GM12878 (cell line): ENCODE measurements at regions of chr4 and their contacts with region 1.

Region 1: DNA sequence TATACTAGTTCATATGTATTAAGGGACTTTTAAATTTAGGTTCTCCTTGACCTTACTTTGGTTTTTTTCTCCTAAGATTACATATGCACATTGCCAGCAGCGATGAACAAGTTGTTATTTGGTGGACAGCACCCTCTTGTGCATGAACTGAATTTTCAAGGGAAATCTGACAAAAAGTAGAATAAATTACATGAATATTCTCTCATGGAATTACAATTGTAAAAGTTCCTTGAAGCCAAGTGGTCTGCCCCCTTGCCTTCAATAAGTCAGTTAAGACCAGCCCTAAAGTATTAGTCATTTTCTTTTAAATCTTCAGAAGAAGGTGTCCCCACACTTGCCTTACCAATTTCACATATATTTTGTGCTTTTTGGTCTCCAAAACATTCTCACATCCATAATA is 30.7 kb upstream of the SMARCA5 start:
- DNase-seq: no peak
- ATAC-seq: peak; percentile 83
- H3K4me3 ChIP-seq: no peak overlapping the region
- H3K27ac ChIP-seq: no peak overlapping the region
- H3K4me1 ChIP-seq: no peaks in the 10 kb centered on the region
- H3K27me3 ChIP-seq: no peaks in the 10 kb centered on the region; a peak in 1 of 4 replicates
- CTCF ChIP-seq: peak; percentile 38 to 74 (median 42); a peak in 4 of 6 replicates
- EP300 ChIP-seq: no peak
- POLR2A ChIP-seq: no peak
- RAD21 ChIP-seq: peak; percentile 94

Region 2: DNA sequence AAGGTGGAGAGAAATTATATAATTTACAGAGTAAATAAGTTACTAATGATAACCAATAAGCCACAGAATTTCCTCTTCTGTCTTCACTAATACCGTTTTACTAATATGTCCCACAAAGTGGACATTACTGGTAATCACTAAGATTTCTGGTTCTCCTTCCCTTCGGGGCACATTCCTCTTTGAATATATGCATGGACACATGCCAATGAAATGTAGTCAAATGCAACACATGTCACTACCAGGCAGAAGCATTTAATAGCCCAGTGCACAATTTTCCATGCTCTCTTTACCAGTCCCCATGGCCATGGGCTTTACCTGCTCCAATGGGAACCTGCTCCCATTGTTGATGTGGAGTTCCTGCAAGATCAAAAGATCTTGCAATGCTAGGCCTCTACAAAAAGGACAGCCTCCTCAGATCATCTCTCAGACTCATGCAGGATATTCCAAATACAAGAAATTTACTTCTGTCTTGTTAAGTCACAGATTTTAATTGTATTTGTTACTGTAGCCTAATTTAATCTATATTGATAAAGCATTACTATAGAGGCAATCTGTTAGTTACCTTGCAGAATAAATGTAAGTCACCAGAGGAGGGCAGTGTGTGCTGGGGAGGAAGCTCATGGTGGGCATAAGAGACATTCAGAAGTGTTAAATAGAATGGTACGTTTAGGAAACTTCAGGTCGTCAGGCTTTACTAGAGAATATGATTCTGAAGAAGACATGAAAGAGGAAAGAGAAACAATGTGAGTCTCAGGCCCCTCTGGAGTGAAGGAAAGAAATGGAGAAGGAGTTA is 599.6 kb before region 1 on chr4:
- CTCF ChIA-PET with region 1: interaction called, 4 read pairs
- POLR2A ChIA-PET with region 1: no interaction called
- RAD21 ChIA-PET with region 1: no interaction called
- SMC1A ChIA-PET with region 1: no interaction called
- in situ Hi-C with region 1: no loop called
- intact Hi-C with region 1: loop called (anchors 10 kb)
- DNase-seq: no peak
- ATAC-seq: peak; percentile 57; the same call in 2 of the 3 replicates
- H3K4me3 ChIP-seq: no peak overlapping the region
- H3K27ac ChIP-seq: no peak overlapping the region
- H3K4me1 ChIP-seq: no peaks in the 10 kb centered on the region
- H3K27me3 ChIP-seq: no peaks in the 10 kb centered on the region
- CTCF ChIP-seq: peak in 2 of 3 experiments; percentile 20 to 30; a peak in 2 of 6 replicates
- EP300 ChIP-seq: no peak
- POLR2A ChIP-seq: no peak
- RAD21 ChIP-seq: peak; percentile 25; the same call in 1 of the 2 replicates

Region 3: GRCh38 chr4:143046454-143046853 is 436.4 kb before region 1 on chr4:
- CTCF ChIA-PET with region 1: no interaction called
- POLR2A ChIA-PET with region 1: no interaction called
- RAD21 ChIA-PET with region 1: no interaction called
- SMC1A ChIA-PET with region 1: no interaction called
- in situ Hi-C with region 1: no loop called
- intact Hi-C with region 1: no loop called
- DNase-seq: no peak
- ATAC-seq: no peak
- H3K4me3 ChIP-seq: no peak overlapping the region
- H3K27ac ChIP-seq: no peak overlapping the region
- H3K4me1 ChIP-seq: no peaks in the 10 kb centered on the region
- H3K27me3 ChIP-seq: no peaks in the 10 kb centered on the region
- CTCF ChIP-seq: no peak
- EP300 ChIP-seq: no peak
- POLR2A ChIP-seq: no peak
- RAD21 ChIP-seq: no peak

Region 4: DNA sequence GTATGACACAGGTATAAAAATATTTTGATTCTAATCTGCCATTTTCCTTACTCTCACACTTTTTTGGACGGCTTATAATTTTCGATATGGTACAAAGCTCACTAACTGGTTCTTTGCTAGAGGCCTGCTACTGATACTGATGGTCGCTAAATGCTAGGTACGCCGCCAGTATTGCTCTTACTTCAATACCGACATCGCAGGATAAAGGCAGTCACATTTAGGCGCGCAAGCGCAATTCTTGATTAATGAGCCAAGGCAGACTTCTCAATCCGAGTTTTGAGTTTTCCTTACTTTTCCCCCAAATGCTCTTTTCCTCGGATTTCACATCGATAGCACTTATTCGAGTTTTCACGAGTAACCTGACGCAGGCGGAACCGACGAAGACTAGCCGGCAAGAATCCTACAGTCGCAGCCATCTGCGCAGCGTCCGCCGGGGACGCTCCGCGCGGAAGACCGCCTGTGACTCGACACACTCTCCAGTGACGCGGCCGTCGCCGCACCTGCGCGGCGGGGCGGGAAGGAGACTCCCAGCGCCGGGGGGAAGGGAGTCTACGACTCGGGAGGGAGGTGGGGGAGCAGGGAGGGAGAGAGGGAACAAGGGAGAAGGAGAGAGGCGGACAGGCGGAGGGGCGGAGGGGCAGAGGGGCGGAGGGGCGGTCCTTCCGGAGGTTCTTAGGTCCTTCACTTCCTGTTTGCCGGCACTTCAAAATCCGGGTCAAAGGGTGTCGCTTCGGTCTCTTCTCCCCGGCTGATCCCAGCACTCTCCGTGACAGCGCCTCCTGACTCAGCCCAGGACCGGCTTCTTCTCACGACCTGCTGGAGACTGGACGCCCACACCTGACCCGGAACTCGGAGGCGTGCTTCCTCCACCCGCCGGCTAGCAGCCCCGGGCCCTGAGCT is 298.4 kb before region 1 on chr4 and contains the start of gene USP38:
- CTCF ChIA-PET with region 1: no interaction called
- POLR2A ChIA-PET with region 1: no interaction called
- RAD21 ChIA-PET with region 1: no interaction called
- SMC1A ChIA-PET with region 1: no interaction called
- in situ Hi-C with region 1: no loop called
- intact Hi-C with region 1: loop called (anchors 5 kb)
- DNase-seq: peak; percentile 73
- ATAC-seq: peak; percentile 88
- H3K4me3 ChIP-seq: peak within 1 kb of the TSS; percentile 89
- H3K27ac ChIP-seq: peak within 1 kb of the TSS; percentile 77
- H3K4me1 ChIP-seq: no peaks in the 10 kb centered on the region
- H3K27me3 ChIP-seq: no peaks in the 10 kb centered on the region
- CTCF ChIP-seq: no peak
- EP300 ChIP-seq: no peak
- POLR2A ChIP-seq: peak; percentile 77
- RAD21 ChIP-seq: no peak
- polyA plus RNA-seq, gene USP38: 4.4 to 4.6 TPM

Region 5: DNA sequence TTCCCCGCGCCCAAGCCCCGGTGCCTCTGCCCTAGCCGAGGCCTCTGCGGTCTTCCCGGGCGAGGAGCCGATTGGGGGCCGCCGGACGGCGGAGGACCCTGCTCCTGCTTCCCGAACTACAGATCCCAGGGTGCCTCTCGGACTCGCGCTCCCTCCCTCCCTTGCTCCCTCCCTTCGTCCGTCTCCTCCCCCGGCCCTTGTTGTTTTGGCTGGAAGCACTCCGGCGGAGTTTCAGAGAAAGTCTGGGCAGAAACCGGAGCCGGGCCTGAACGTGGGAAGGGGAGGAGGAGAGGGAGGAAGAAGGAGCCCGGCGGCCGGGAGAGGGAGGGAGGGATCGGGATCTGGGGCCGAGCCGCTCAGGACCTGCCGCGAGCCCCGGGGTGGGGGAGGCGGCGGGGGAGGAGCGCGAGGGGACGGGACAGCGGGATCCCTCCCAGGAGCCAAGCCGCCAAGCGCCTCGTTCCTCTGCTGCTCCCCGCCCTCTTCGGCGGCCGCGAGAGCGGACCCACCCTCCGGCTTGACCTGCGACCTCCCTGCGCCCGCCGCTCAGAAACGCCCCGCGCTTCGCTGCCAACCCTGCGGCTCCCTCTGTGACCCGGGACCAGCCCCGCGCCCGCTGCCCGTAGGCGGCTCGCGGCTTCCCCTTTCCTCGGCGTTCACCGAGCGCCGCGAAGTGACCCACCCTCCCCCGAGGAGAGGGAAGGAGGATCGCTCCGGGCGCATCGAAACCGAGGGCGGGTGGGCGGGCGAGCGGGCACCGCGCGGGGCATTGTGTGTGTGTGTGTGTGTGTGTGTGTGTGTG is 146.7 kb before region 1 on chr4:
- CTCF ChIA-PET with region 1: interaction called, 4 read pairs
- POLR2A ChIA-PET with region 1: no interaction called
- RAD21 ChIA-PET with region 1: no interaction called
- SMC1A ChIA-PET with region 1: no interaction called
- in situ Hi-C with region 1: no loop called
- intact Hi-C with region 1: loop called (anchors 5 kb)
- DNase-seq: no peak
- ATAC-seq: peak; percentile 66
- H3K4me3 ChIP-seq: peak overlapping the region; percentile 87
- H3K27ac ChIP-seq: no peak overlapping the region
- H3K4me1 ChIP-seq: no peaks in the 10 kb centered on the region; the same call in 1 of the 2 replicates
- H3K27me3 ChIP-seq: 0 out of 4 replicates have a peak, but pooled peaks cover 1 to 3% of the 10 kb centered on the region in 2 experiments
- CTCF ChIP-seq: no peak
- EP300 ChIP-seq: no peak
- POLR2A ChIP-seq: peak; percentile 41; the same call in 1 of the 2 replicates
- RAD21 ChIP-seq: no peak

Region 6: GRCh38 chr4:143399113-143399949 is 83.5 kb before region 1 on chr4:
- CTCF ChIA-PET with region 1: interaction called, 9 read pairs
- POLR2A ChIA-PET with region 1: no interaction called
- RAD21 ChIA-PET with region 1: interaction called, 5 read pairs
- SMC1A ChIA-PET with region 1: interaction called, 22 read pairs
- in situ Hi-C with region 1: no loop called
- intact Hi-C with region 1: loop called (anchors 1 kb)
- DNase-seq: no peak
- ATAC-seq: peak; percentile 76
- H3K4me3 ChIP-seq: no peak overlapping the region
- H3K27ac ChIP-seq: no peak overlapping the region
- H3K4me1 ChIP-seq: peaks cover 19% of the 10 kb centered on the region
- H3K27me3 ChIP-seq: no peaks in the 10 kb centered on the region; a peak in 1 of 4 replicates
- CTCF ChIP-seq: peak; percentile 62 to 69 (median 62)
- EP300 ChIP-seq: no peak
- POLR2A ChIP-seq: no peak
- RAD21 ChIP-seq: peak; percentile 72

Region 7: GRCh38 chr4:143502231-143502630 is 19.4 kb after region 1 on chr4:
- CTCF ChIA-PET with region 1: no interaction called
- POLR2A ChIA-PET with region 1: no interaction called
- RAD21 ChIA-PET with region 1: no interaction called
- SMC1A ChIA-PET with region 1: no interaction called
- in situ Hi-C with region 1: no loop called
- intact Hi-C with region 1: no loop called
- DNase-seq: no peak
- ATAC-seq: no peak
- H3K4me3 ChIP-seq: no peak overlapping the region
- H3K27ac ChIP-seq: no peak overlapping the region
- H3K4me1 ChIP-seq: no peaks in the 10 kb centered on the region
- H3K27me3 ChIP-seq: no peaks in the 10 kb centered on the region
- CTCF ChIP-seq: no peak
- EP300 ChIP-seq: no peak
- POLR2A ChIP-seq: no peak
- RAD21 ChIP-seq: no peak

Region 8: GRCh38 chr4:144715230-144715629 is 1232.4 kb after region 1 on chr4:
- CTCF ChIA-PET with region 1: no interaction called
- POLR2A ChIA-PET with region 1: no interaction called
- RAD21 ChIA-PET with region 1: no interaction called
- SMC1A ChIA-PET with region 1: no interaction called
- in situ Hi-C with region 1: no loop called
- intact Hi-C with region 1: no loop called
- DNase-seq: peak; percentile 0
- ATAC-seq: peak; percentile 97
- H3K4me3 ChIP-seq: no peak overlapping the region
- H3K27ac ChIP-seq: no peak overlapping the region
- H3K4me1 ChIP-seq: no peaks in the 10 kb centered on the region
- H3K27me3 ChIP-seq: no peaks in the 10 kb centered on the region
- CTCF ChIP-seq: no peak
- EP300 ChIP-seq: no peak
- POLR2A ChIP-seq: no peak
- RAD21 ChIP-seq: no peak